ENCODE measurements at regions of chr6 and their contacts with region 1.

Region 1: GRCh38 chr6:111642463-111643158 is 36.9 kb upstream of the TRAF3IP2 start:
- DNase-seq: peak in 1 of 2 donors; percentile 75
- ATAC-seq: peak; percentile 63 to 79
- H3K4me3 ChIP-seq: peak overlapping the region in 2 of 4 donors; percentile 3 to 8
- H3K27ac ChIP-seq: peak overlapping the region in 1 of 4 donors; percentile 29
- H3K4me1 ChIP-seq: peaks cover 15 to 21% of the 10 kb centered on the region in 2 donors
- H3K27me3 ChIP-seq: no peaks in the 10 kb centered on the region
- CTCF ChIP-seq: peak; percentile 53 to 72 (median 62)
- POLR2A ChIP-seq: no peak

Region 2: DNA sequence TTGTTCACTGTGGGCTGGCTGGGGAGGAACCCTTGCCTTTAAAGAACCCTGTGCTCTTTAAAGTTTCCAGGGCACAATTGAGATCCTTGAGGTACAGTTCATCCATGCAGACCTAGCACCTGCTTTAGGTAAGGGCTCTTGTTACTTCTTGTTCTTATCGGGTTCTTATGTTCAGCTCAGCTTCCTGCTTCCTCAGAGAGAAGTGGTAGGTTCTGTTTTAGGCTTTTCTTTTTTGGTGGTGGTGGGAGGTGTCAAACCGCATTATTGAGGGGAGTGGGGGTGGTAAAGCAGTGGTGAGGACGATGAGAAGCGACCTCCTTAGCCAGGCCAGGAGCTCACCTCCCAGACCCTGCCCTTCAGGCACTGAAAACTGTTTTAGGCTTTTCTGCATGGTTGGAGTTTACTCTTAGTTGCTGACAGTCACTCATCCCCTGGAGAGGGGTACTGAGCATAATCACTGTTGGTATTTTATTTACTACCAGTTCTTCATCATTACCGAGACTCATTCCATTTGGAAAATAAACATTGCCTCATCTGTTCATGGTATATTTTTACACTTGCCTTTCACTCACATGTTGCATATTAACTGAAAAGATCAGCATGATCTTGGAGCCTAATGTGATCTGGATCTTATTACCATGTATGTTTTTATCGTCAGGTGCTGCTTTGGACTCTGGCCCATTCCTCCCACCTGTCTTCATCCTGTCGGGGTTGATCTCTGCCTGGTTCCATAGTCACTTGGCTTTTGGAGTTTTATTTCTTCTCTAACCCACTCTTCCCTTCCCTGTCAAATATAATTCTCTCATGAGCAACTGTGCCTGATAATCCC is 519.9 kb before region 1 on chr6:
- in situ Hi-C with region 1: no loop called
- intact Hi-C with region 1: loop called (anchors 5 kb)
- DNase-seq: peak; percentile 75 to 80
- ATAC-seq: peak; percentile 79 to 82
- H3K4me3 ChIP-seq: peak overlapping the region; percentile 21 to 48 (median 40)
- H3K27ac ChIP-seq: peak overlapping the region; percentile 88 to 98 (median 92)
- H3K4me1 ChIP-seq: peaks cover 36 to 60% of the 10 kb centered on the region in 2 donors
- H3K27me3 ChIP-seq: no peaks in the 10 kb centered on the region
- CTCF ChIP-seq: no peak
- POLR2A ChIP-seq: peak; percentile 29 to 38

Region 3: GRCh38 chr6:111361648-111362047 is 281.0 kb before region 1 on chr6:
- in situ Hi-C with region 1: loop called in 1 of 4 experiments (anchors 25 kb)
- intact Hi-C with region 1: no loop called
- DNase-seq: no peak
- ATAC-seq: no peak
- H3K4me3 ChIP-seq: no peak overlapping the region
- H3K27ac ChIP-seq: no peak overlapping the region
- H3K4me1 ChIP-seq: no peaks in the 10 kb centered on the region
- H3K27me3 ChIP-seq: no peaks in the 10 kb centered on the region
- CTCF ChIP-seq: peak in 3 of 5 experiments; percentile 14 to 26 (median 17)
- POLR2A ChIP-seq: no peak

Region 4: GRCh38 chr6:111534231-111534751 is 108.3 kb before region 1 on chr6:
- in situ Hi-C with region 1: no loop called
- intact Hi-C with region 1: loop called (anchors 5 kb)
- DNase-seq: peak; percentile 90 to 95
- ATAC-seq: peak; percentile 96 to 97
- H3K4me3 ChIP-seq: peak overlapping the region in 1 of 4 donors; percentile 10
- H3K27ac ChIP-seq: peak overlapping the region; percentile 80 to 90 (median 84)
- H3K4me1 ChIP-seq: peaks cover 31 to 54% of the 10 kb centered on the region in 2 donors
- H3K27me3 ChIP-seq: no peaks in the 10 kb centered on the region
- CTCF ChIP-seq: no peak
- POLR2A ChIP-seq: peak in 1 of 2 donors; percentile 21

Region 5: GRCh38 chr6:111663692-111664564 is 21.3 kb after region 1 on chr6:
- in situ Hi-C with region 1: no loop called
- intact Hi-C with region 1: loop called (anchors 1 kb)
- DNase-seq: peak; percentile 56 to 77
- ATAC-seq: peak; percentile 63 to 64
- H3K4me3 ChIP-seq: peak overlapping the region; percentile 12 to 52 (median 22)
- H3K27ac ChIP-seq: peak overlapping the region; percentile 88 to 96 (median 95)
- H3K4me1 ChIP-seq: peaks cover 78 to 83% of the 10 kb centered on the region in 2 donors
- H3K27me3 ChIP-seq: no peaks in the 10 kb centered on the region
- CTCF ChIP-seq: peak in 1 of 5 experiments; percentile 6
- POLR2A ChIP-seq: peak; percentile 11 to 59

Region 6: GRCh38 chr6:111700135-111700690 is 57.6 kb after region 1 on chr6:
- in situ Hi-C with region 1: no loop called
- intact Hi-C with region 1: no loop called
- DNase-seq: no peak
- ATAC-seq: no peak
- H3K4me3 ChIP-seq: no peak overlapping the region
- H3K27ac ChIP-seq: no peak overlapping the region
- H3K4me1 ChIP-seq: no peaks in the 10 kb centered on the region
- H3K27me3 ChIP-seq: no peaks in the 10 kb centered on the region
- CTCF ChIP-seq: no peak
- POLR2A ChIP-seq: no peak